HEK293 (cell line): ENCODE measurements at regions of chr17 and their contacts with region 1.

Region 1: GRCh38 chr17:78013683-78014467 is 55.4 kb downstream of the TNRC6C start:
- H3K4me3 ChIP-seq: no peak overlapping the region
- H3K27ac ChIP-seq: no peak overlapping the region
- H3K4me1 ChIP-seq: no peaks in the 10 kb centered on the region
- CTCF ChIP-seq: peak; percentile 51

Region 2: GRCh38 chr17:77542551-77543490 is 471.1 kb before region 1 on chr17:
- CTCF ChIA-PET with region 1: interaction called, 119 read pairs
- POLR2A ChIA-PET with region 1: no interaction called
- H3K4me3 ChIP-seq: no peak overlapping the region
- H3K27ac ChIP-seq: no peak overlapping the region; the same call in 1 of the 2 replicates
- H3K4me1 ChIP-seq: peaks cover 13% of the 10 kb centered on the region
- CTCF ChIP-seq: peak; percentile 75; the same call in 1 of the 2 replicates

Region 3: GRCh38 chr17:77963441-77963840 is 50.4 kb before region 1 on chr17:
- CTCF ChIA-PET with region 1: interaction called, 28 read pairs
- POLR2A ChIA-PET with region 1: interaction called, 51 read pairs
- H3K4me3 ChIP-seq: no peak overlapping the region
- H3K27ac ChIP-seq: no peak overlapping the region
- H3K4me1 ChIP-seq: peaks cover 40% of the 10 kb centered on the region
- CTCF ChIP-seq: no peak

Region 4: DNA sequence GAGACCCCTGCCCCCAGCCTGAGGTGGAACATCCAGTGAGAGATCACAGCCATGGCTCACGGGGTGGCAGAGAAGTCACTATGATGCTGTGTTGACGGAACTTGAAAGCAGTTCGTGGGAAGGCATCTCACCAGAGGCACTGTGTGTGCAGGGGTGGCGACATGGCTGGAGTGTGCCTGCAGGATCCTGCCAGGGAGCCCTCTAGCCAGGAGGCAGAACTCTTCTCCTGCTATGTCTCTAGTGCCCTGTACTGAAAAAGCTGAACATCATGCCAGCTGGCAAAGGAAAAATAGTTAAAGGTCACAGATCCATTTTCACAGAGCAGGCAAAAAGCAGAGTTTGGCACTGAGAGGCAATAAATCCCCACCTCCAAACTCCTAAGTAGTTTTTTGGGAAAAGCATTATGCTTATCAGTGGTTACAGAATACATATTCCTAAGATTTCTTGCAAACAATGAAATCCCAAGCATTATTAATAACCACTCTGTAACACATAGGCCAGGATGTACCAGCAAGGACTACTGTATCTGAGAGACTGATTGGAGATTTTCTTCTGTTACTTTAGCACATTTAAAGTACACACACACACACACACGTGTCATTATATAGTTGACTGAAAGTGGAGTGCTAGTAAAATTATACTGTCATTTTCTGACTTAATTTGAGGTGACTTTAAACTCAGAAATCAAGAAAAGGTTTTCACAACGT is 18.6 kb before region 1 on chr17:
- CTCF ChIA-PET with region 1: interaction called, 12 read pairs
- POLR2A ChIA-PET with region 1: no interaction called
- H3K4me3 ChIP-seq: no peak overlapping the region
- H3K27ac ChIP-seq: no peak overlapping the region
- H3K4me1 ChIP-seq: peaks cover 14% of the 10 kb centered on the region; the same call in 1 of the 2 replicates
- CTCF ChIP-seq: no peak

Region 5: DNA sequence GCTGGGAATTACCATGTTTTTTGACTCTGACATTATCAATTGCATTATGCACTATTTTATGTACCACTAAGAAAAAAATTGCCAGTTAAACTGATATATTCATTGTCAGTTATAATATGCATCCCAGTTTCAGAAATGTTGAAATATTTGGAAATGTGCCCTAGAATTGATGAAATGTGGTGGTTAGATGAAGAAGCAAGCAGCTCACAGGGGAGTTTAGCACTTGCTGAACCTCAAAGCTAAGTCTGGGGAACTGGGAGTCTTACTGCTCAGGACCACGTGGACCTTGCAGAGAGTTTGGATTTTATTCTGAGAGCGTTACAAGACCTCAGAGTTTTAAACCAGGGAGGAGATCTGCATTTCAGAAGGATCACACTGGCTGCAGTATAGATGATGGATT is 12.5 kb after region 1 on chr17:
- CTCF ChIA-PET with region 1: interaction called, 58 read pairs
- POLR2A ChIA-PET with region 1: no interaction called
- H3K4me3 ChIP-seq: no peak overlapping the region
- H3K27ac ChIP-seq: no peak overlapping the region
- H3K4me1 ChIP-seq: no peaks in the 10 kb centered on the region
- CTCF ChIP-seq: no peak

Region 6: GRCh38 chr17:78471635-78472543 is 458.0 kb after region 1 on chr17:
- CTCF ChIA-PET with region 1: no interaction called
- POLR2A ChIA-PET with region 1: no interaction called
- H3K4me3 ChIP-seq: no peak overlapping the region
- H3K27ac ChIP-seq: no peak overlapping the region
- H3K4me1 ChIP-seq: no peaks in the 10 kb centered on the region
- CTCF ChIP-seq: no peak